Activated naive CD4-positive, alpha-beta T cell treated with anti-CD3 and anti-CD28 coated beads, Interleukin-2, amount 10 ng/mL, durations not matched to agents 7 days and 5 days (primary cell): ENCODE measurements at regions of chr15 and their contacts with region 1.

Region 1: DNA sequence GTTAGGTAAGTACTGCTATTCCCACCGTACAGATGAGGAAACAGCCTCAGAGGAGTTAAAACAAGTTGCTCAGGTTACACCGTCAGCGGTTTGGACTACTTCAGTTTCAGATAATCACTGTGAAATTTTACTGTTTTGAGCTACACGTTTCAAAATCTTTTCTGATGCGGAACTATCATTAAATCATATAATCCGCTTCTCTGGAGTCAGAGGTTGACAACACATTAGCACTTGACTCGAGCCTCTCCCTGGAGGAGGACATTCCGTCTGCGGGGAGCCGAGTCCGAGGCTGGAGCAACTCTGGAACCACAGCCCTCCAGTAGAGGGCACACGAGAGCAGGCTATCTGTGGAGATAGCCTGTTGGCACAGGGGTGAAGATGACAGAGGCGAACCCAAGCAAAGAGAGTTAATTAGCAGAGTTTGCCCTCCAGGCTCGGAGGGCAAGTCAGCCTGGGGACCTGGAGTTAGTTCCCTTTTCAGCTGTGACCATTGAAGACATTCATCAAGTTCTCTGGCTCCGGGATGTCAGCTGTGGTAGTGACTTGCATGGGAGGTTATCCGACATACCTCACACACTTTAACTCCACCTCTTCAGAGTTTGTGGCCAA is 131.2 kb downstream of the IGF1R start:
- DNase-seq: peak; percentile 80
- H3K4me3 Mint-ChIP-seq: no peak overlapping the region
- H3K27ac Mint-ChIP-seq: no peak overlapping the region
- H3K4me1 Mint-ChIP-seq: peaks cover 26% of the 10 kb centered on the region
- H3K27me3 Mint-ChIP-seq: peaks cover 5% of the 10 kb centered on the region

Region 2: GRCh38 chr15:98794211-98794610 is 14.6 kb after region 1 on chr15:
- CTCF ChIA-PET with region 1: interaction called, 13 read pairs
- DNase-seq: no peak
- H3K4me3 Mint-ChIP-seq: no peak overlapping the region
- H3K27ac Mint-ChIP-seq: no peak overlapping the region
- H3K4me1 Mint-ChIP-seq: peaks cover 2% of the 10 kb centered on the region
- H3K27me3 Mint-ChIP-seq: no peaks in the 10 kb centered on the region

Region 3: DNA sequence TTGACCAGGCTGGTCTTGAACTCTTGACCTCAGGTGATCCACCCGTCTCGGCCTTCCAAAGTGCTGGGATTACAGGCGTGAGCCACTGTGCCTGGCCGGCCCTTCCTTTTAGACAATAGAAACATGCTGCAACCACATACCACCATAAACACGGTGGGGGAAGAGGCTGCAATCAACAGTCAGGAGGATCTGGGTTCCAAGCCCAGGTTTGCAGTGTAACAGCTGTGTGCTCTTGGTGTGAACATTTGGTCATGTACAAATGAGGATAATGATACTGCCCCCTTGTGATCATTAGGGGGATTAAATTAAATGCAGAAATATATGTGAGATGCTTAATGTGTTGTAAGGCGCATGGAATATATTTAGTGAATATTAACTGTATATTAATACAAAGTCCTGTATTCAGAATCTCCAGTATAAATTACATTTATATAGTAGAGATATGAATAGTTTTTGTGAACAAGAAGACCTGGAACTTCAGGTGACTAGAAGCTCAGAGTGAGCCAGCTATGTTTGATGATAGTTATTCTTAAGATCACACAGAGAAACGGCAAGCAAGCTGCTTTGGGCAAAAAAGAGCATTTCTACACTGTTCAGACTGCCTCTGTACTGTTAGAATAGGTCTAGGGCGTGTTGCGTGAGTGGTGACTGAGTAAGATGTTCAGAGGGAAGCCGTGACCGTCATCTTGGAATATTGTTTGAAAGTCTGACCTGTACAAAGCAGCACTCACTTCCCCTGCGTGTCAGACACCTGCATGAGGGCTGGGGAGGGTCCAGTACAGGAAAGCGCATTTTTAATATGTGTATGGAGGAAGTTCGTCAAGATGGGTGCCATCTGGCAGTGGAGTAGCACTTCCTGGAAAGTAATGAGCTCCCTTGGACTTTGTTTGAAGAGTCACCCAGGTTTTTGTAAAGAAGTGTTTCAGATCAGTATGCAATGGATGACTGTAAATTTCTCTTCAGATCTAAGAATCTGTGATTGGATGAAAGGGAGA is 102.3 kb after region 1 on chr15:
- CTCF ChIA-PET with region 1: interaction called, 40 read pairs
- DNase-seq: peak; percentile 27
- H3K4me3 Mint-ChIP-seq: no peak overlapping the region
- H3K27ac Mint-ChIP-seq: no peak overlapping the region
- H3K4me1 Mint-ChIP-seq: peaks cover 7% of the 10 kb centered on the region
- H3K27me3 Mint-ChIP-seq: no peaks in the 10 kb centered on the region

Region 4: GRCh38 chr15:99076552-99077308 is 297.2 kb after region 1 on chr15:
- CTCF ChIA-PET with region 1: interaction called, 20 read pairs
- DNase-seq: peak; percentile 50
- H3K4me3 Mint-ChIP-seq: peak overlapping the region; percentile 48
- H3K27ac Mint-ChIP-seq: no peak overlapping the region
- H3K4me1 Mint-ChIP-seq: peaks cover 7% of the 10 kb centered on the region
- H3K27me3 Mint-ChIP-seq: peaks cover 19% of the 10 kb centered on the region